Posterior cingulate gyrus (tissue), 11 donors: ENCODE measurements at regions of chr10 and their contacts with region 1.

Region 1: GRCh38 chr10:132685101-132685891 is 100.7 kb downstream of the NKX6-2 start:
- DNase-seq: peak; percentile 67 to 98 (median 92)

Region 2: DNA sequence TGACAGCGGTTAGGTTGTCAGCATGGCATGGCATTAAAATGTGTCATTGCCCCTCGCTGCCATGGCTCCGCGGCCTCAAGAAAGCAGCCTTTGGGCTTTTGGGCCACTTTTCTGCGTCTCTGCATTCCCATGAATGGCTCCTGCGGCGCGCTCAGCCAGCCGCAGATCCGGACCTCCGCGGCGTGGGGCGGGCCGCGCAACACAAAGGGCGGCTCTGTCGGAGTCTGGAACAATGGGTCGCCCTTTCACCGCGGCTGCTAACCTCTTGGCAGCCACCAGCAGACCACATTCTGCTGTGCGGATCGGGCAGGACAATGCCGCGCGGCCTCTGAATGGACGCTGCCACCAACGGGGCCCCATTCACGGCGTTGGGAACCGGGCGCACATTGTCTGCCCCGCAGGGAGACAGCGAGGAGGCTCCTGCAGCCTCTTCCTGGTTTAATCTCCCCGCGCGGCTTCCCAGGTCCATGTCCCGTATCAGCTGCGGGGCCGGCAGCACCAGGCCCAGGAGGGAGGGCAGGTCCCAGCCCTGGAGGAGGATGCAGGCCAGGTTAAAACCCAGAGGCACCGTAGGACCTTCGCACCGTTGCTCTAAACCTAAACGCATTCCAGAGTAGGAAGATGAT is 28.9 kb after region 1 on chr10:
- intact Hi-C with region 1: loop called (anchors 1 kb)
- DNase-seq: peak; percentile 81 to 98 (median 89)